ENCODE measurements at regions of chr14 and their contacts with region 1.

Region 1: GRCh38 chr14:58297762-58298476 is 436 bp upstream of the ARID4A start:
- DNase-seq: peak; percentile 98
- H3K4me3 Mint-ChIP-seq: no peak overlapping the region
- H3K27ac Mint-ChIP-seq: no peak overlapping the region
- H3K4me1 Mint-ChIP-seq: peaks cover 26% of the 10 kb centered on the region
- H3K27me3 Mint-ChIP-seq: no peaks in the 10 kb centered on the region

Region 2: DNA sequence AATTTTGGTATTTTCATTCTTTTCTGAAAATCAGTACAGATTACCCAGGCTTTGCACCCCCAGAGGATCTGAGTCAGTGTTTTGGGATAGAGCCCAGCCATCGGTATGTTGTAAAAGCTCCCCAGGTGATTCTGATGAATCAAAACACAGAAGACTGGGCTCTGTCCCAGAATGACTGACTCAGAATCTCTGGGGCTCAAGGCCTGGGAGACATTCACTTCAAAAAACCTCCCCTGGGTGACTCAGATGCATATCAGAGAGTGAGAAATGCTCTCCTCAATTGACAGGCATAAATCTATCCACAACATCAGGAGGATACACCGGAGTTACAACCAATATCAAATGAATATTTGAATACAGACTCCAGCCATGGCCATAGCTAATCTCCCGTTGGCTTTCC is 464.6 kb before region 1 on chr14:
- intact Hi-C with region 1: no loop called
- DNase-seq: no peak
- H3K4me3 Mint-ChIP-seq: no peak overlapping the region
- H3K27ac Mint-ChIP-seq: no peak overlapping the region
- H3K4me1 Mint-ChIP-seq: no peaks in the 10 kb centered on the region
- H3K27me3 Mint-ChIP-seq: no peaks in the 10 kb centered on the region

Region 3: DNA sequence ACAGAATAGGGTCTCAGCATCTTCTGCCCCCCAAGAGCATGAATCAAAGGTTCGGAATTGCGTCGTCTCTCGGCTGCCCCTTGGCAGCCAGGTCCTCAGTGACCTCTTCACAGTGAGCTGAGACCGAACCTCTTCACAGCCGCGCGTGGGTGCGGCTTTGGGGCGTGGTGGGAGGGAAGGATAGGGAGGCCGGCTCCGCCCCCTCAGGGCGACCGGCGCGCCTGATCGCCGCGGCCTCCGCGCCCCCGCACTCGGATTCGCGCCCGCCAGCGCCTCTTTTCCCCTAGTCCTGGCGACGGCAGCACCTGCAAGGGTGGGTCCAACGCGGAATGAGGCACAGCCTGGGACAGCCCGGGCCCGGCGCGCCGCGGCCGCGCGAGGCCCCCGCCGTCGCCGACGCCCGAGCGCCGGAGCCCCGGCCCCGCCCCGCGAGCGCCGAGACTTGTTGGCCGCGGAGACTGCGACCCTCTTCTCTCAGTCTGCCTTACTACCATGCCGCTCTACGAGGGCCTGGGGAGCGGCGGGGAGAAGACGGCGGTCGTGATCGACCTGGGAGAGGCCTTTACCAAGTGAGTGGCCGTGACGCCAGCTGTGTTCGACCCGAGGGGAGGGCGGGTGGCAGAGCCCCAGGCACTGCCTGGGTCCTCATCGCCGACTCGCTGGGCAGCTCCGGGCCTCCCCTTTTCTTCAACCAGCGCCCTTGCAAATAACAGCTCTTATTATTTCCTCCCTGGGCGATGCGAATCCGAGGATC is 98.0 kb before region 1 on chr14 and contains the start of gene ACTR10:
- intact Hi-C with region 1: loop called (anchors 2 kb)
- DNase-seq: peak; percentile 80
- H3K4me3 Mint-ChIP-seq: peak within 1 kb of the TSS; percentile 92
- H3K27ac Mint-ChIP-seq: peak within 1 kb of the TSS; percentile 79
- H3K4me1 Mint-ChIP-seq: peaks cover 16% of the 10 kb centered on the region
- H3K27me3 Mint-ChIP-seq: peaks cover 9% of the 10 kb centered on the region
- total RNA-seq, gene ACTR10: 38.2 and 39.8 TPM in 2 replicates

Region 4: DNA sequence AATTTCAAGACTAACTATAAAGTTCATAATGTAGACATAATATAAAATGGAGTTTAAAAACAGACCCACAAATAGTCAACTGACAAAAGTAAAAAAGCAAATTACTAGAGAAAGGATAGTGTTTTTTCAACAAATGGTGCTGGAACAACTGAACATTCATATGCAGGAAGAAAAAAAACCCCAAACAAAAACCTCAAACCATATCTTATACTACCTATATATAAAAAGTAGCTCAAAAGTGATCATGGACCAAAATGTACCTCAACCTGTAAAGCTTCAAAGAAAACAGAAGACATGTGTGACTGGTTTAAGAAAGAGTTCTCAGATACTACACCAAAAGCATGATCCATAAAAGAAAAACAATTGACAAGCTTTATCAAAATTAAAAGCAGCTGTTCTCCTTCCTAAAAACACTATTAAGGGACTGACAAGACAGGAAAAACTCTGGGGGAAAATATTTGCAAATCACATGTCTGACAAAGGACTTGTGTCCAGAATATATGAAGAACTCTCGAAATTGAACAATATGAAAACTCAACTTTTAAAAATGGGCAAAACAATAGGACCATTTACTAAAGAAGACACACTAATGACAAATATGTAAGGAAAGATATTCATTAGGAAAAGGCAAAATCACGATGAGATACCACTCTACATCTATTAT is 22.3 kb before region 1 on chr14:
- intact Hi-C with region 1: loop called (anchors 1 kb)
- DNase-seq: no peak
- H3K4me3 Mint-ChIP-seq: no peak overlapping the region
- H3K27ac Mint-ChIP-seq: peak overlapping the region; percentile 84
- H3K4me1 Mint-ChIP-seq: peaks cover 39% of the 10 kb centered on the region
- H3K27me3 Mint-ChIP-seq: no peaks in the 10 kb centered on the region

Region 5: DNA sequence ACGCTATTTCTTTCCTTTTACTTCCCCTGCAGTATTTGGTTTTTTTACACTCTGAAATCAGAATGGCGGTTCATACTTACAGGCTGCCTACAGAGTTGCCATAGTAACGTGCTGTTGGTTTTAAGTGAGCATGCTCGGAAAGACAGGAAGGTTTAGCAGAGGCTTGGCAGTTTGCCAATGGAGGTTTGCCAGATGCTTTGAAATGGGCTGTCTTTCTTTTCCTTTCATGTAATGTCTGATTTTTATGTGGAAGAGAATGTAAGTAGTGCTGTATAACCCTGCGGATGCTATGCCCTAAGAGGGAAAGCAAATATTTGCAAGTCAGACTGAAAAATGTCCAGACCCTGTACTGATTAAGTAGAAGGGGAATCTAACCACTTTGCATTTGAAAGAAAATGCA is 33.2 kb after region 1 on chr14:
- intact Hi-C with region 1: loop called (anchors 2 kb)
- DNase-seq: peak; percentile 83
- H3K4me3 Mint-ChIP-seq: peak overlapping the region; percentile 59
- H3K27ac Mint-ChIP-seq: peak overlapping the region; percentile 69
- H3K4me1 Mint-ChIP-seq: peaks cover 14% of the 10 kb centered on the region
- H3K27me3 Mint-ChIP-seq: no peaks in the 10 kb centered on the region

Region 6: DNA sequence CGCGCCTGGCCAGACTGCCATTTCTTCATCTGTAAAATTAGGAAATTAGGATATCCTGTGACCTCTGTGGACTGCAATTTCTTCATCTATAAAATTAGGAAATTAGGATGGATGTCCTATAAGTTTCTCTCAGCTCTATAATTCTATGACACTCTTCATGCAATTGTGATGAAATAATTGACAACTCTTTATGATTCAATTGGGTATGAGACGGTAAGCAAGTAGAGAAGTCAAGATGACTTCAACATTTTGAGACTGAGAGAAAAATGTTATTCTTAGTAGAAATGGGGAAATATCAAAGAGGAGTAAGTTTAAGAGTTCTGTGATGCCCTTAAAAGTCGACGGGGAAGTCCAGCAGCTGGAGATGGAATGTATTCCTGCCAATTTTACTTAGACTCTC is 141.6 kb after region 1 on chr14:
- intact Hi-C with region 1: no loop called
- DNase-seq: no peak
- H3K4me3 Mint-ChIP-seq: no peak overlapping the region
- H3K27ac Mint-ChIP-seq: no peak overlapping the region
- H3K4me1 Mint-ChIP-seq: no peaks in the 10 kb centered on the region
- H3K27me3 Mint-ChIP-seq: no peaks in the 10 kb centered on the region

Region 7: DNA sequence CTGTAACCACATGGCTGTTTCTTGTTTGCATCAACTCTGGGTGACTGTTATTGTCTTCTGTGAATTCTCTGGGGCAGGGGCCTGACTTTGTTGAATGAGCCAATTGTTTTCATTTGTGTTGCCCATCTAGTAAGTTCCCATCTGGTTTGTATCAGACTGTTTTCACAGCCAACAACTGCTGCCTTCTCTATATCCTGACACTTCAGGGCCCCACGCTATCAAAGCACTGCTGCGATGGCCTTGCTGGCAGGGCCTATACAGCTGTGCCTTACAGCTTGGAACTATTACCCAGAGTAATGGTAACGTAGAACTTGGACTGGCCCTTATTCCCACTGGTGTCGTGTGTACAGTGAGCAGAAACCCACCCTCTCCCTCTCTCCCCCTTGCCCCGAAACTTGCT is 235.5 kb after region 1 on chr14:
- intact Hi-C with region 1: no loop called
- DNase-seq: no peak
- H3K4me3 Mint-ChIP-seq: no peak overlapping the region
- H3K27ac Mint-ChIP-seq: no peak overlapping the region
- H3K4me1 Mint-ChIP-seq: no peaks in the 10 kb centered on the region
- H3K27me3 Mint-ChIP-seq: no peaks in the 10 kb centered on the region

Measured in activated T-helper 2 cell treated with anti-CD3 and anti-CD28 coated beads, Interferon-gamma antibody, Interleukin-2, Interleukin-4, amounts not matched to agents 10 μg/mL and 5 μg/mL and 100 μg/mL, durations not matched to agents 14 hours and 24 hours and 36 hours (primary cell).